Panc1 (cell line): ENCODE measurements at regions of chr3 and their contacts with region 1.

Region 1: GRCh38 chr3:48356420-48356819 is 15.6 kb upstream of the FBXW12 start:
- DNase-seq: no peak
- ATAC-seq: no peak
- H3K4me3 ChIP-seq: no peak overlapping the region
- H3K27ac ChIP-seq: no peak overlapping the region
- H3K4me1 ChIP-seq: no peaks in the 10 kb centered on the region
- H3K27me3 ChIP-seq: no peaks in the 10 kb centered on the region; the same call in 1 of the 2 replicates
- CTCF ChIP-seq: no peak

Region 2: GRCh38 chr3:48739955-48740823 is 383.8 kb after region 1 on chr3:
- CTCF ChIA-PET with region 1: interaction called, 13 read pairs
- POLR2A ChIA-PET with region 1: no interaction called
- in situ Hi-C with region 1: no loop called
- intact Hi-C with region 1: no loop called
- DNase-seq: no peak
- ATAC-seq: peak; percentile 97
- H3K4me3 ChIP-seq: no peak overlapping the region
- H3K27ac ChIP-seq: no peak overlapping the region
- H3K4me1 ChIP-seq: peaks cover 3% of the 10 kb centered on the region
- H3K27me3 ChIP-seq: no peaks in the 10 kb centered on the region
- CTCF ChIP-seq: peak; percentile 89